ENCODE measurements at regions of chr10 and their contacts with region 1.

Region 1: GRCh38 chr10:99548041-99548530 is 15.3 kb downstream of the NKX2-3 start:
- DNase-seq: peak in 2 of 3 donors; percentile 74
- H3K4me3 ChIP-seq: no peak overlapping the region
- H3K27ac ChIP-seq: no peak overlapping the region
- H3K4me1 ChIP-seq: peaks cover 0 to 15% (median 13%) of the 10 kb centered on the region in 4 experiments
- H3K27me3 ChIP-seq: peaks cover 0 to 2% (median 0%) of the 10 kb centered on the region in 5 experiments

Region 2: GRCh38 chr10:99532687-99533495 is 15.2 kb before region 1 on chr10 and contains the start of gene NKX2-3:
- CTCF ChIA-PET with region 1: interaction called, 19 read pairs
- POLR2A ChIA-PET with region 1: no interaction called
- DNase-seq: peak; percentile 95 to 97 (median 96)
- H3K4me3 ChIP-seq: peak within 1 kb of the TSS; percentile 47 to 96 (median 83)
- H3K27ac ChIP-seq: peak within 1 kb of the TSS; percentile 72 to 93
- H3K4me1 ChIP-seq: peaks cover 8 to 88% (median 73%) of the 10 kb centered on the region in 4 experiments
- H3K27me3 ChIP-seq: peaks cover 0 to 22% (median 0%) of the 10 kb centered on the region in 5 experiments

Region 3: GRCh38 chr10:99560277-99561126 is 12.4 kb after region 1 on chr10:
- CTCF ChIA-PET with region 1: interaction called, 50 read pairs
- POLR2A ChIA-PET with region 1: no interaction called
- DNase-seq: peak in 2 of 3 donors; percentile 42 to 51
- H3K4me3 ChIP-seq: no peak overlapping the region
- H3K27ac ChIP-seq: no peak overlapping the region
- H3K4me1 ChIP-seq: peaks cover 0 to 7% (median under 1%) of the 10 kb centered on the region in 4 experiments
- H3K27me3 ChIP-seq: no peaks in the 10 kb centered on the region